ENCODE measurements at regions of chr15 and their contacts with region 1.

Region 1: DNA sequence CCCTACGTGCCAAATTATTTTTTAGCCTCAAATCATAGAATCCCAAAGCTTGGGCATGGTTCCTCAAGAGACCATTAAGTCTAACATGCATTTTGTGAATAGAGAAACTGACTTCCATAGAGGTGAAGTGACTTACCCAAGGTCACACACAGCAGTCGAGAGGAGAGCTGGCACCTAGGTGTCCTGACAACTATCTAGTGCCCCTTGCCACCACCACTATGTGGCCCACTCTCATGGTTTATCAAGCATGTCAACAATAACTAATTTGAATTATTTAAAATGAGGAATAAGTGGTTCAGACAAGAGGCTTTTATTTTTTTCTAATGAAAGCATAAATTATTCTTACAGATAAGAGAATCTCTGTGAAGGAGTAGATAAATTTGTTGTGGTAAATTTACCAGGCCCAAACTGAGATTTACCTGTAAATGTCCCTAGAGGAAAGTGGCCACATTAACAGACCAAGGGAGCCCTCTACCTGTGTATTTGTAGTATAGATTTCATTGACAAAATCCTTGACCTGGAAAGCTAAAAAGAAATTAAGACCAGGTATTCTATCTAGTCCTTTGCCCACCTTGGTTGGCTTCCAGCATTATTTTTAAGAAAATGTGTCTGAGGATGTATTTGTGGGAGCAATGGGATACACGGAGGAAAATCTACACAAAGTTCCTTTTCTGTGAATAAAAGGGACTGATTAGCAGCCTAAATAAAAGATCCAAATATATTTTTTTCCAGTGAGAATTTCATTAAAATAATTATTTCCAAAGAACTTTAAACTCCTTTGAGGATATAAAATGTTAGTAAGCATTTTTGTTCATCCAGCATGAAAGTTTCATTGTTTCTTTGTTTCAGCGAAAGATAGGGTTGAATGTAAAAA is 49.1 kb downstream of the IQCH start:
- DNase-seq: peak; percentile 26
- H3K4me3 ChIP-seq: no peak overlapping the region
- H3K27ac ChIP-seq: no peak overlapping the region
- H3K4me1 ChIP-seq: no peaks in the 10 kb centered on the region
- H3K27me3 ChIP-seq: no peaks in the 10 kb centered on the region
- CTCF ChIP-seq: peak; percentile 29

Region 2: GRCh38 chr15:67048281-67049279 is 255.1 kb before region 1 on chr15:
- intact Hi-C with region 1: no loop called
- DNase-seq: peak; percentile 86
- H3K4me3 ChIP-seq: no peak overlapping the region
- H3K27ac ChIP-seq: peak overlapping the region; percentile 90
- H3K4me1 ChIP-seq: peaks cover 14% of the 10 kb centered on the region
- H3K27me3 ChIP-seq: no peaks in the 10 kb centered on the region
- CTCF ChIP-seq: no peak

Region 3: DNA sequence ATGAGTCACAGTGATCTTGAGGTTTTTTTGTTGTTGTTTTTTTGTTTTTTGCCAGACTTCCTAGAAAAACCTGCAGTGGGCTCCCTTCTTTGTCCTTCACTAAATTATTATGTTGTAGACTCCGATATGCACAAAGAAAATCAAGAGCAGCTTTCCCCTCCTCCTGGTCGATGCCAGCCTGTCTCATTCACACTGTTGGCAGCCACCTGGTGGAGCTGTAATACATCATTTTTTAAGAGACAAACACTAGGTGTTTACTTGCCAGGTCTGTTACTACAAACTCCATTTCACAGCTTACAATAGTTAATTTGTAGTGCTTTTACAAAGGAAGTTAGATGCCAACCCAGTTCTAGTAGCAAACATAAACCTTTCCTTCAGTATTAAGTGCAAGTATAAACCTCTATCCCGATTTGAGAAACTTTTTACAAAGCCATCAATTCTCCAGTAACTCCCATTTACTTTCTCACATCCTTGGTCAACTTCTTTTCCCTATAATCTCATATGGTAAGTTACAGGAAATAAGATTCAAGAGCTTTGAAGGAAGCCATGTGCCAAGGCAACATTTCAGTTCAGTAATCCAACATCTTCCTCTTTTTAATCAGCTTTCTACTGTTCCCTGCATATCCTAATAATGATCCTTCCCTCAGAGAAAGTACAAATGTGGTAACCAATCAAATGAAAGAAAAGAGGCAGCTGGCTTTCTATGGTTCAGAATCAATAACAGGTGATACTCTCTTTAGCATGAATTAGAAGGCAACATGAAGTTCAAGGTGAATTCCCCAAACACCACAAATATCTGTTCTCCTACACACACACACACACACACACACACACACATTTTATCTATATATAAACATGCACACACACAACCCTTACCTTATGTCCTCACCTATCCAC is 63.2 kb before region 1 on chr15:
- intact Hi-C with region 1: loop called (anchors 5 kb)
- DNase-seq: no peak
- H3K4me3 ChIP-seq: no peak overlapping the region
- H3K27ac ChIP-seq: no peak overlapping the region
- H3K4me1 ChIP-seq: no peaks in the 10 kb centered on the region
- H3K27me3 ChIP-seq: no peaks in the 10 kb centered on the region
- CTCF ChIP-seq: no peak

Measured in colonic mucosa (tissue), 4 donors.